Gastrocnemius medialis (tissue), 4 donors: ENCODE measurements at regions of chr9 and their contacts with region 1.

Region 1: GRCh38 chr9:99819856-99820684 is 1.6 kb upstream of the NR4A3 start:
- DNase-seq: peak; percentile 90 to 97
- ATAC-seq: peak; percentile 53 to 60
- H3K4me3 ChIP-seq: peak overlapping the region; percentile 81 to 88 (median 84)
- H3K27ac ChIP-seq: peak overlapping the region; percentile 95 to 100 (median 100)
- H3K4me1 ChIP-seq: peaks cover 8 to 29% of the 10 kb centered on the region in 2 donors
- H3K27me3 ChIP-seq: peaks cover 0 to 6% (median 0%) of the 10 kb centered on the region in 3 donors
- CTCF ChIP-seq: peak in 1 of 5 experiments; percentile 23
- POLR2A ChIP-seq: peak; percentile 74 to 80

Region 2: DNA sequence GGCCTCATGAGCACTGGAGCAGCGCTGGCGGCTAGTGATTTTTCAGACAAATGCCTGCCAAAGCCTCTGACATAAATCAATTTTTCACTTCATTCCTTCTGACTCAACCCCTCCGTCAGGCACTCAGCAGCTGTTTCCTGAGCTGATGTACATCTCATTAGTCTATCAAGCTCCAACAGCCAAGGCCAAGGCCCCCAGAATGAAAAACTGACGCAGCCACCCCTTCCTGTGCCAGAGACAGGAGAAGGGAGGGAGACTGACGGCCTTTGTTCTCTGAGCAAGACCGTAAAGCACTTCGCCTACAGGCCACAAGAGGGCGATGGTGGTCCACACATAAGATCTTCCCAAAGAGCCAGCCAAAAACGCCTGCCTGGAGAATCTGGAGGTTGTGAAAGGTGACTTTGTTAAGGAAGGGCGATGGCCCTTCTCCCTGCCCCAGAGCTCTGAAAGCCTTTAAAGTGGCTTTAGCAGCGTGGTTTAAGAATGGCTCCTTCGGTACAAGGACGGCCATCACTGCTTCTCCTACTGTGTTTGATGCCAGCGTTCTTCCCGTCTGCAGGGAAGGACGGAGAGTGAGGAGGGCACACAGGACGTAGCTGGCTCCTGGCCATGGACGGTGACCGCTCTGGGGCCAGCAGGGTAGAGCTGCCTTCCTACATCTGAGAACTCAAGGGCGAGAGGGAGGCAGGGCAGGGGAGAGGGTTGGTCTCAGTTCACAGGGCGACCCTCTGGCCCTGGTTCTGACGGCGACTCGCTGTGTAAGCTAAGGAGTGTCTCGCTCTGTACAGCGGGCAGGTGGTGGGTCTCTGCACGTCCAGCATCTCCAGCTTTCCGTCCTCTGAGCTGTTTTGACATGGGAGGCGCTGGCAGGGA is 635.4 kb before region 1 on chr9:
- in situ Hi-C with region 1: loop called in 2 of 4 experiments (anchors 25 kb)
- intact Hi-C with region 1: loop called (anchors 10 kb)
- DNase-seq: peak; percentile 70 to 86
- ATAC-seq: peak; percentile 94 to 97
- H3K4me3 ChIP-seq: peak overlapping the region; percentile 3 to 48 (median 40)
- H3K27ac ChIP-seq: peak overlapping the region in 2 of 4 donors; percentile 12 to 30
- H3K4me1 ChIP-seq: peaks cover 0 to 7% of the 10 kb centered on the region in 2 donors
- H3K27me3 ChIP-seq: no peaks in the 10 kb centered on the region
- CTCF ChIP-seq: peak; percentile 90 to 97 (median 92)
- POLR2A ChIP-seq: no peak

Region 3: DNA sequence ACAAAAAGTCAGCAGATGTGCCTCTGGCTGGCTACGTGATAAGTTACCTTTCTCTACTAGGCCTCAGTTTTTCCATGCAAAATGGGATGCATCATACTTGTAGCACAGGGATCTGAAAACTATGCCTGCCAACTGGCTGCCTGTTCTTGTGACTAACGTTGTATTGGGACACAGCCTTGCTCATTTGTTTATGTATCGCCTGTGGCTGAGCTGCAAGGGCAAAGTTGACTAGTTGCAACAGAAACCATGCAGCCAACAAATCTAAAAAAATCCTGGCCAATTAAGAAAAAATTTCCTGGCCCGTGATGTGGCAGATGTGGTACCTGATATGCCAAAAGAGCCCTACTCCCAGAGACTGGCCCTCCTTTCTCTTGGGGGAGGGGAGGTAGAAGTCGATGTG is 466.7 kb before region 1 on chr9:
- in situ Hi-C with region 1: loop called in 1 of 4 experiments (anchors 10 kb)
- intact Hi-C with region 1: loop called (anchors 1 kb)
- DNase-seq: no peak
- ATAC-seq: no peak
- H3K4me3 ChIP-seq: no peak overlapping the region
- H3K27ac ChIP-seq: peak overlapping the region in 3 of 4 donors; percentile 20 to 44 (median 38)
- H3K4me1 ChIP-seq: peaks cover 26 to 27% of the 10 kb centered on the region in 2 donors
- H3K27me3 ChIP-seq: no peaks in the 10 kb centered on the region
- CTCF ChIP-seq: no peak
- POLR2A ChIP-seq: no peak

Region 4: DNA sequence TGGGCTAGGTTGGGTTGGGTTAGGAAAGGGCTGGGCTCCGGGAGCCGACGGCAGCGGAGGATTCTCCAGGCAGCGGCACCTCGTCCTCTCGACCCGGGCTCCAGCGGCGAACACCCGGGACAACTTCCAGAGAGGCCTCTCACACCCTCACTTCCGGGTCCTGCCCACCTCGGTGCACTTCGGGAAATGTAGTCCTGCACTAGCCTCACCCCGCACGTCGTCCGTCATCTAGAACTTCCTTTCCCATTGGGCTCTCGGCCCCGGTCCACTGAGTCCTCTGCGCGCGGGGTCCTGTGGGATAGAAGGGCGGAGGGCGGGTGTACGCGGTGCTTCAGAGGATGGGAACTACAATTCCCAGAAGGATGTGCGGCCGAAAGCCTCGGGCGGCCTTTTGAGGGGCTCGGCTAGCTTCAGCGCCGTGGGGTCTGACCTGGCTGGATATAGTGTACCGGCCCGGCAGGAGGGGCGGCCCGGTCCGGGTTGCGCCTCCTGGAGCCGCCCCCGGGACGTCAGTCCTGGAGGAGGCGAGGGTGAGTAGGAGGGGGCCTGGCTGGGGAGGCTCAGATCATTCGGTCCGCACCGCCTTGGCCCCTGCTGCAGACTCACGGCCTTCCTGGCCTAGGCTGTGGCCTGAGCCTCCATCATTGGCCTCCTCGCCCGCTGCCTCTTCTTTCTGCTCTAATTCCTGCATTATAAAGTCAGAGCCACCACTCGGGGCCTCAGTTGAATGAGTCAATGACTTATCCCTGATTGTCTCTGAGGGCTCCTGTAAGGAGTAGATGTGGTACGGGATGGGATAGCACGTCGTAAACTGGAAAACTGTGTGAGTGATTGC is 279.0 kb after region 1 on chr9 and contains the starts of genes ERP44 and INVS:
- in situ Hi-C with region 1: no loop called
- intact Hi-C with region 1: loop called (anchors 5 kb)
- DNase-seq: peak; percentile 99 to 100
- ATAC-seq: peak; percentile 95
- H3K4me3 ChIP-seq: peak within 1 kb of the TSS; percentile 87 to 98 (median 98)
- H3K27ac ChIP-seq: peak within 1 kb of the TSS; percentile 90 to 99 (median 95)
- H3K4me1 ChIP-seq: peaks cover 31 to 38% of the 10 kb centered on the region in 2 donors
- H3K27me3 ChIP-seq: no peaks in the 10 kb centered on the region
- CTCF ChIP-seq: no peak
- POLR2A ChIP-seq: peak; percentile 92 to 94
- total RNA-seq, gene ERP44: 7.0 to 10.8 (median 9.7) TPM
- total RNA-seq, gene INVS: 5.5 to 13.9 (median 6.7) TPM

Region 5: GRCh38 chr9:100426530-100427428 is 606.7 kb after region 1 on chr9 and contains the start of gene MSANTD3:
- in situ Hi-C with region 1: no loop called
- intact Hi-C with region 1: loop called (anchors 5 kb)
- DNase-seq: peak; percentile 25 to 61
- ATAC-seq: peak; percentile 74 to 77
- H3K4me3 ChIP-seq: peak within 1 kb of the TSS; percentile 67 to 88 (median 80)
- H3K27ac ChIP-seq: peak within 1 kb of the TSS; percentile 80 to 90 (median 85)
- H3K4me1 ChIP-seq: peaks cover 26 to 32% of the 10 kb centered on the region in 2 donors
- H3K27me3 ChIP-seq: no peaks in the 10 kb centered on the region
- CTCF ChIP-seq: peak; percentile 25 to 45 (median 41)
- POLR2A ChIP-seq: peak in 1 of 2 donors; percentile 4
- total RNA-seq, gene MSANTD3: 23.3 to 62.6 (median 40.1) TPM

Region 6: DNA sequence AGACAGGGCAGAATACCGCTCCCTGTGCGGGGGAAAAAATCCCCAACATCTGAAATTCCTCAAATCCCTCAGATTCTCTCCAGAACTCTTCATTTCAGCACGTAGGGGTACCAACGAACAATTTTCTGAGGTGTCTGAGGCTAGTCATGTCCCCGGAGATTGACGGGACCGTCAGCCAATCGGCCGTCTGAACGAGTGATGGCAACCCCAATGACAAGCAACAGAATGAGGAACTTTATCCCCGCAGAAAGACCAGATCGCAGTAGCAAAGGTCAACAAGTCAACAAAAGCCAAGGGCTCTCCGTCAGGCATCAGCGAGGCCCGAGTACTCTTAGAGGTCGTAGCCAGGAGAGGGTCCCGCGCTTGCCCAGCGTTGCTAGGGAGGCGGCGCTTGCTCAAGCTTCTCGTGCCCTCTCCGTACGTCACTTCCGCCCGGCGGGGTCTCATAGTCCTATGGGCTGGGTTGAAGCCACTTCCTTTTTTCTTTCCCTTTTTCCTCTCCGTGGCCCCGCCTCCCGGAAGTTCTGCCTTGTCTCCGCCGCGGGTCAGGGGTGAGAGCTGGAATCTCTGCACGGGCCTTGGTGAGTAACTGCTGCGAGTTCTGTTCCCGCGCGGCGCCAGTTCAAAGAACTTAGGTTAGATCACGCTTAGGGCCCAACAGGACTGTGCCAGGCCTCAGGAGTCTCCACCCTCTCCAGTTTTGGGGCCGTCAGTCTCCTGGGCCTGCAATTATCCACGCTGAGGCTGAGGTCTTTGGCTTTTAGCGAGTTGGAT is 1713.5 kb after region 1 on chr9 and contains the start of gene RNF20:
- in situ Hi-C with region 1: no loop called
- intact Hi-C with region 1: loop called (anchors 10 kb)
- DNase-seq: peak; percentile 99
- ATAC-seq: peak; percentile 99
- H3K4me3 ChIP-seq: peak within 1 kb of the TSS; percentile 83 to 94 (median 88)
- H3K27ac ChIP-seq: peak within 1 kb of the TSS; percentile 89 to 96 (median 95)
- H3K4me1 ChIP-seq: peaks cover 27 to 28% of the 10 kb centered on the region in 2 donors
- H3K27me3 ChIP-seq: no peaks in the 10 kb centered on the region
- CTCF ChIP-seq: no peak
- POLR2A ChIP-seq: peak in 1 of 2 donors; percentile 27
- total RNA-seq, gene RNF20: 26.6 to 34.4 (median 29.7) TPM